PC-3 (cell line): ENCODE measurements at regions of chr13 and their contacts with region 1.

Region 1: GRCh38 chr13:28679628-28680027 is 20.7 kb downstream of the POMP start:
- DNase-seq: peak; percentile 35
- ATAC-seq: no peak
- H3K4me3 ChIP-seq: no peak overlapping the region
- H3K27ac ChIP-seq: no peak overlapping the region
- H3K4me1 ChIP-seq: no peaks in the 10 kb centered on the region
- H3K27me3 ChIP-seq: no peaks in the 10 kb centered on the region
- CTCF ChIP-seq: peak; percentile 62

Region 2: DNA sequence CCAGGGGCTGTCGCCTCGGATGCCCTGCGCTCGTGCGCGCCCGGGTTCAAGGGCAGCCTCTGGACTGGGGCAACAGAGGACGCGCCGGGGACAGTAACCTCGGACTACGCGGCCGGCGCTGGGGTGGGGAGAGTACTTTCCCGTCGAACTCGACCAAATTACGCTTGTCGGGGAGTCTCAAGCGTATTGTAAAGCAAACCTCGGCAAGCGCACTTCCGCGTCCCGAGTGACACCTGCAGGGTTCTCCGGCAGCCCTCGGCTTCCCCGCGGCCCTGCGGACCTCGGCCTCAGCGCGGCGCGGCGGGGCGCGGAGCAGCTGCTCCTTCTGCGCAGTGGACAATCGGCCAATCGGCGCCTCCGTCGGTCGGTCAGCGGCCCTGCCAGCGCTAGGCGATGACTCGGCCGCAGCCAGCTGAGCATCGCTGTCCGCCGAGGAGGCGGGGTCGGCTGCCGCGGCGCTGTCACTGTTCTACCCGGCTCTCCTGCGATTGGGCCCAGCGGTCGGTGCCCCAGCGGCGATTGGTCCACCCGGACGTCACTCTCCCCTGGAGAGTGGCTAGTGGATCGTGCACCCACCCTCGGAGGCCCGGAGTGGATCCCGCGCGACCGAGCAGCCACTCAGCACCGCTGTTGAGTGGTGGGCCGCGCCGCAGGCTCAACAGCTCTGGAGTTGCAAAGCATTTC is 39.1 kb after region 1 on chr13 and contains the start of gene SLC46A3:
- CTCF ChIA-PET with region 1: no interaction called
- POLR2A ChIA-PET with region 1: no interaction called
- intact Hi-C with region 1: loop called (anchors 5 kb)
- DNase-seq: peak; percentile 84
- ATAC-seq: peak; percentile 94
- H3K4me3 ChIP-seq: peak within 1 kb of the TSS; percentile 71
- H3K27ac ChIP-seq: peak within 1 kb of the TSS; percentile 46
- H3K4me1 ChIP-seq: peaks cover 32% of the 10 kb centered on the region
- H3K27me3 ChIP-seq: no peaks in the 10 kb centered on the region
- CTCF ChIP-seq: no peak
- total RNA-seq, gene SLC46A3: 0.84 and 1.4 TPM in 2 replicates

Region 3: DNA sequence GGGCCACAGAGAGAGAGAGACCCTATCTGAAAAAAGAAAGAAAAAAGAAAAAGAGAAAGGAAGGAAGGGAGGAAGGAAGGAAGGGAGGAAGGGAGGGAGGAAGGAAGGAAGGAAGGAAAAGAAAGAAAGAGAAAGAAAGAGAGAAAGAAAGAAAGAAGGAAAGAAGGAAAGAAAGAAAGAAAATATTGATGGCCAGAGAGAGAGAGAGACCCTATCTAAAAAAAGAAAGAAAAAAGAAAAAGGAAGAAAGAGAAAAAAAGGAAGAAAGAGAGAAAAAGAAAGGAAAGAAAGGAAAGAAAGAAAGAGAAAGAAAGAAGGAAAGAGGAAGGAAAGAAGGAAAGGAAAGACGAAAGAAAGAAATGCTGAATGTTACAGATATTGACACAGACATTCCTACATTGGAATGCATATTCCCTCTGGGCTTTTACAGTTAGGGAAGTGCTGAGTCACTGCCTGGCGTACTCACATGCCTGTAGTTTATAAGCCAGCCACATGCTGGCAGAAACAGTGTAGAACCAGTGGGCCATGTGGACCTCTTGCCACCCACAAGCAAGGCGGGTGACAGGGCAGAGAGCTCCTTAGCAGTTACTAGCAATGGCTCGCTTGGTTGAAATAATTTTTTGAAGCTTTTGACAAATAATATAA is 73.7 kb after region 1 on chr13:
- CTCF ChIA-PET with region 1: no interaction called
- POLR2A ChIA-PET with region 1: no interaction called
- intact Hi-C with region 1: loop called (anchors 5 kb)
- DNase-seq: peak; percentile 92
- ATAC-seq: peak; percentile 96
- H3K4me3 ChIP-seq: peak overlapping the region; percentile 44; the same call in 1 of the 2 replicates
- H3K27ac ChIP-seq: peak overlapping the region; percentile 76
- H3K4me1 ChIP-seq: peaks cover 26% of the 10 kb centered on the region
- H3K27me3 ChIP-seq: no peaks in the 10 kb centered on the region
- CTCF ChIP-seq: no peak